Dendritic cell treated with granulocyte-macrophage colony-stimulating factor and Interleukin-4, amounts not matched to agents 40 ng/mL and 50 ng/mL, for 4 days (primary cell): ENCODE measurements at regions of chr2 and their contacts with region 1.

Region 1: GRCh38 chr2:149561309-149561926 is 26.2 kb downstream of the MMADHC start:
- H3K4me3 Mint-ChIP-seq: no peak overlapping the region
- H3K27ac Mint-ChIP-seq: no peak overlapping the region
- H3K4me1 Mint-ChIP-seq: no peaks in the 10 kb centered on the region
- H3K27me3 Mint-ChIP-seq: no peaks in the 10 kb centered on the region

Region 2: GRCh38 chr2:149017116-149017985 is 544.1 kb before region 1 on chr2:
- intact Hi-C with region 1: loop called (anchors 1 kb)
- H3K4me3 Mint-ChIP-seq: no peak overlapping the region
- H3K27ac Mint-ChIP-seq: no peak overlapping the region
- H3K4me1 Mint-ChIP-seq: peaks cover 33% of the 10 kb centered on the region
- H3K27me3 Mint-ChIP-seq: peaks cover 13% of the 10 kb centered on the region

Region 3: GRCh38 chr2:149040451-149040850 is 521.0 kb before region 1 on chr2:
- intact Hi-C with region 1: loop called (anchors 1 kb)
- H3K4me3 Mint-ChIP-seq: no peak overlapping the region
- H3K27ac Mint-ChIP-seq: no peak overlapping the region
- H3K4me1 Mint-ChIP-seq: no peaks in the 10 kb centered on the region
- H3K27me3 Mint-ChIP-seq: peaks cover 53% of the 10 kb centered on the region